ENCODE measurements at regions of chr15 and their contacts with region 1.

Region 1: GRCh38 chr15:66946578-66947164 is 118.7 kb upstream of the SMAD3 start:
- DNase-seq: peak; percentile 74
- ATAC-seq: peak; percentile 73
- H3K4me3 Mint-ChIP-seq: no peak overlapping the region
- H3K27ac Mint-ChIP-seq: no peak overlapping the region
- H3K4me1 Mint-ChIP-seq: no peaks in the 10 kb centered on the region
- H3K27me3 Mint-ChIP-seq: no peaks in the 10 kb centered on the region
- CTCF ChIP-seq: peak; percentile 99

Region 2: GRCh38 chr15:66830358-66830757 is 116.3 kb before region 1 on chr15:
- CTCF ChIA-PET with region 1: no interaction called
- POLR2A ChIA-PET with region 1: no interaction called
- DNase-seq: no peak
- ATAC-seq: no peak
- H3K4me3 Mint-ChIP-seq: no peak overlapping the region
- H3K27ac Mint-ChIP-seq: no peak overlapping the region
- H3K4me1 Mint-ChIP-seq: peaks cover 66% of the 10 kb centered on the region
- H3K27me3 Mint-ChIP-seq: peaks cover 11% of the 10 kb centered on the region
- CTCF ChIP-seq: no peak

Region 3: GRCh38 chr15:66905954-66906353 is 40.7 kb before region 1 on chr15:
- CTCF ChIA-PET with region 1: interaction called, 10 read pairs
- POLR2A ChIA-PET with region 1: interaction called, 4 read pairs
- DNase-seq: no peak
- ATAC-seq: peak; percentile 45
- H3K4me3 Mint-ChIP-seq: no peak overlapping the region
- H3K27ac Mint-ChIP-seq: no peak overlapping the region
- H3K4me1 Mint-ChIP-seq: peaks cover 4% of the 10 kb centered on the region; the same call in 1 of the 2 replicates
- H3K27me3 Mint-ChIP-seq: peaks cover 2% of the 10 kb centered on the region; the same call in 1 of the 2 replicates
- CTCF ChIP-seq: no peak

Region 4: GRCh38 chr15:67064607-67065443 is 118.2 kb after region 1 on chr15:
- CTCF ChIA-PET with region 1: interaction called, 13 read pairs
- POLR2A ChIA-PET with region 1: no interaction called
- DNase-seq: peak; percentile 76
- ATAC-seq: peak; percentile 10
- H3K4me3 Mint-ChIP-seq: peak overlapping the region; percentile 70
- H3K27ac Mint-ChIP-seq: peak overlapping the region; percentile 95
- H3K4me1 Mint-ChIP-seq: peaks cover 45% of the 10 kb centered on the region
- H3K27me3 Mint-ChIP-seq: peaks cover 31% of the 10 kb centered on the region
- CTCF ChIP-seq: no peak

Region 5: DNA sequence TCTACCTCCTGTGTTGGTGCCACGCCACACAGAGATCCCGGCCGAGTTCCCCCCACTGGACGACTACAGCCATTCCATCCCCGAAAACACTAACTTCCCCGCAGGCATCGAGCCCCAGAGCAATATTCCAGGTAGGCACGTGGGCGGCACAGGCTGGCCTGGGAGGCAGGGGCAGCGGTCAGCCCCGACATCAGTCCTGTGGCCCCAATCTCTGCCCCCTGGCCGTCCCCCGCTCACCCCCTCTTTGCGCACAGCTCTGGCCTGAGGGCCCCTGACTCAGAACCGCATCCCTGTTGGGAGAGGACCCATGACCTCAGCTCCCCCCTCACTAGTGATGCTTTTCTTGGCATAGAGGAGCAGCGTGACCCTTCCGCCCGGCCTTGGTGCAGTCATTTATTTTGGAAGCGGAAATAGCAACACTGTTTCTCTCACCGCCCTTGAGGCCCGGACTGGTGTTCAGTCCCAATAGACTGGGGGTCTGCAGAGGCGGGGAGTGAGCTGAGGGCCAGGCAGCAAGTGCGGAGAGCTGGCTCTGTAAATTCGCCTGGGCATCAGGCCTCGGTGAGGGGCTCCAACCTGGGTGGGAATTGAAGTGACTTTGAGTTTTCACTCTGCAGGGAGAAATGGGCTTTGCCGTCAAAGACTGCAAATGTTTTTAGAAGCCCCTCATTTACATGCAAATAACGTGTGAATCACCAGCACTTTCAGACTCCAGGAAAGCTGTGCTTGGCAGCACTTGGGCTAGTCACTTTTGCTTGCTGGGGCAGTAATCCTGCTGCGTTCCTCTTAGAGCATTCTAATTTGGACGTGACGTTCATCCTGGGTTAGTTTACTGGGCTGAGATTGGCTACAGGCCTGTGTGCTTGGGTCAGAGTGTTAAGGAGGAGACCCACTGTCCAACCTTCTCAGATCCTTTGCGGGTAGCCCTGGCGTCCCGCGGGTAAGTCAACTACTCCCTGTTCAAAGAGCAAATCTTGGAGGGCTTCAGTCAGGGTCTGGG is 218.9 kb after region 1 on chr15:
- CTCF ChIA-PET with region 1: interaction called, 16 read pairs
- POLR2A ChIA-PET with region 1: no interaction called
- DNase-seq: peak; percentile 45
- ATAC-seq: peak; percentile 85
- H3K4me3 Mint-ChIP-seq: peak overlapping the region; percentile 47
- H3K27ac Mint-ChIP-seq: peak overlapping the region; percentile 97
- H3K4me1 Mint-ChIP-seq: peaks cover 82% of the 10 kb centered on the region
- H3K27me3 Mint-ChIP-seq: no peaks in the 10 kb centered on the region
- CTCF ChIP-seq: no peak

Region 6: GRCh38 chr15:67303490-67304363 is 357.1 kb after region 1 on chr15:
- CTCF ChIA-PET with region 1: interaction called, 36 read pairs
- POLR2A ChIA-PET with region 1: no interaction called
- DNase-seq: no peak
- ATAC-seq: peak; percentile 74
- H3K4me3 Mint-ChIP-seq: no peak overlapping the region
- H3K27ac Mint-ChIP-seq: no peak overlapping the region; the same call in 1 of the 2 replicates
- H3K4me1 Mint-ChIP-seq: peaks cover 7% of the 10 kb centered on the region
- H3K27me3 Mint-ChIP-seq: no peaks in the 10 kb centered on the region
- CTCF ChIP-seq: no peak